Left cardiac atrium (tissue), 4 donors: ENCODE measurements at regions of chr11 and their contacts with region 1.

Region 1: DNA sequence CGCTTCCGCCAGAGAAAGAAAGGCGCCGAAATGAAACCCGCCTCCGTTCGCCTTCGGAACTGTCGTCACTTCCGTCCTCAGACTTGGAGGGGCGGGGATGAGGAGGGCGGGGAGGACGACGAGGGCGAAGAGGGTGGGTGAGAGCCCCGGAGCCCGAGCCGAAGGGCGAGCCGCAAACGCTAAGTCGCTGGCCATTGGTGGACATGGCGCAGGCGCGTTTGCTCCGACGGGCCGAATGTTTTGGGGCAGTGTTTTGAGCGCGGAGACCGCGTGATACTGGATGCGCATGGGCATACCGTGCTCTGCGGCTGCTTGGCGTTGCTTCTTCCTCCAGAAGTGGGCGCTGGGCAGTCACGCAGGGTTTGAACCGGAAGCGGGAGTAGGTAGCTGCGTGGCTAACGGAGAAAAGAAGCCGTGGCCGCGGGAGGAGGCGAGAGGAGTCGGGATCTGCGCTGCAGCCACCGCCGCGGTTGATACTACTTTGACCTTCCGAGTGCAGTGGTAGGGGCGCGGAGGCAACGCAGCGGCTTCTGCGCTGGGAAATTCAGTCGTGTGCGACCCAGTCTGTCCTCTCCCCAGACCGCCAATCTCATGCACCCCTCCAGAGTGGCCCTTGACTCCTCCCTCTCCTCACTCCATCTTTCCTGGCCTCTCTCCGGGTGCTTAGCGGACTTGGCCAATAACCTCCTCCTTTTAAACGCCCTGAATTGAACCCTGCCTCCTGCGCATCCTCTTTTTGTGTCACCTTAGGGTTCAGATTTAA is at the start of gene ATM:
- DNase-seq: peak; percentile 100
- ATAC-seq: peak; percentile 97 to 98
- total RNA-seq, gene ATM: 40.8 to 43.0 TPM

Region 2: GRCh38 chr11:108009497-108010360 is 213.1 kb before region 1 on chr11:
- intact Hi-C with region 1: loop called in 1 of 2 experiments (anchors 10 kb)
- DNase-seq: no peak
- ATAC-seq: peak; percentile 3 to 19

Region 3: GRCh38 chr11:108117746-108118371 is 105.0 kb before region 1 on chr11:
- intact Hi-C with region 1: loop called in 1 of 2 experiments (anchors 2 kb)
- DNase-seq: no peak
- ATAC-seq: no peak

Region 4: DNA sequence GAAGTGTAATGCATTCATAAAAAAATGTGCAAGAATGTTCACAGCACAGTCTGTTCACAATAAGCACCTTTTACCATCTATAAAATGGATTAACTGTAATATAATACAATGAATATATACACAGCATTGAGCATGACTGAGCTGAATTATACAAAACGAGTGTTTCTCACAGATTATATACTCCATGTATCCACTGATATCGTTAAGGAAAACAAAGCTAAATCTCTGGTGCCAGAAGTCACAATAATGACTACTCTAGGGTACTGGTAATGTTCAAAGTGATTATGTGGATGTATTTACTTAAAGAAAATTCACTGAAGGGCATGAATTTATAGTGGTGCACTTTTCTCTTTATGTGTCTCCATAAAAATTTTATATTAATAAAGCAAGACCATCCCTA is 68.3 kb before region 1 on chr11:
- intact Hi-C with region 1: no loop called
- DNase-seq: no peak
- ATAC-seq: no peak